Activated T-helper 1 cell treated with anti-CD3 and anti-CD28 coated beads, Interleukin-12 subunit alpha, Interleukin-12 subunit beta, Interleukin-2, Interleukin-4 antibody, amounts not matched to agents 30 ng/mL and 10 ng/mL and 1 ng/mL, durations not matched to agents 14 hours and 24 hours and 36 hours (primary cell): ENCODE measurements at regions of chr19 and their contacts with region 1.

Region 1: GRCh38 chr19:47348819-47349795 is at the start of gene DHX34:
- DNase-seq: peak; percentile 100
- H3K4me3 Mint-ChIP-seq: peak within 1 kb of the TSS; percentile 93
- H3K27ac Mint-ChIP-seq: peak within 1 kb of the TSS; percentile 94
- H3K4me1 Mint-ChIP-seq: peaks cover 40% of the 10 kb centered on the region
- H3K27me3 Mint-ChIP-seq: no peaks in the 10 kb centered on the region
- total RNA-seq, gene DHX34: 31.1 and 33.9 TPM in 2 replicates

Region 2: GRCh38 chr19:47035127-47036096 is 313.7 kb before region 1 on chr19:
- intact Hi-C with region 1: loop called (anchors 5 kb)
- DNase-seq: peak; percentile 93
- H3K4me3 Mint-ChIP-seq: peak overlapping the region; percentile 86
- H3K27ac Mint-ChIP-seq: peak overlapping the region; percentile 92
- H3K4me1 Mint-ChIP-seq: peaks cover 24% of the 10 kb centered on the region
- H3K27me3 Mint-ChIP-seq: peaks cover 14% of the 10 kb centered on the region

Region 3: GRCh38 chr19:47256688-47257443 is 92.2 kb before region 1 on chr19:
- intact Hi-C with region 1: loop called (anchors 1 kb)
- DNase-seq: peak; percentile 99
- H3K4me3 Mint-ChIP-seq: peak overlapping the region; percentile 86
- H3K27ac Mint-ChIP-seq: peak overlapping the region; percentile 95
- H3K4me1 Mint-ChIP-seq: peaks cover 31% of the 10 kb centered on the region
- H3K27me3 Mint-ChIP-seq: peaks cover 2% of the 10 kb centered on the region

Region 4: GRCh38 chr19:47381653-47382279 is 32.7 kb after region 1 on chr19:
- intact Hi-C with region 1: loop called (anchors 5 kb)
- DNase-seq: no peak
- H3K4me3 Mint-ChIP-seq: no peak overlapping the region
- H3K27ac Mint-ChIP-seq: no peak overlapping the region
- H3K4me1 Mint-ChIP-seq: peaks cover 17% of the 10 kb centered on the region
- H3K27me3 Mint-ChIP-seq: no peaks in the 10 kb centered on the region

Region 5: DNA sequence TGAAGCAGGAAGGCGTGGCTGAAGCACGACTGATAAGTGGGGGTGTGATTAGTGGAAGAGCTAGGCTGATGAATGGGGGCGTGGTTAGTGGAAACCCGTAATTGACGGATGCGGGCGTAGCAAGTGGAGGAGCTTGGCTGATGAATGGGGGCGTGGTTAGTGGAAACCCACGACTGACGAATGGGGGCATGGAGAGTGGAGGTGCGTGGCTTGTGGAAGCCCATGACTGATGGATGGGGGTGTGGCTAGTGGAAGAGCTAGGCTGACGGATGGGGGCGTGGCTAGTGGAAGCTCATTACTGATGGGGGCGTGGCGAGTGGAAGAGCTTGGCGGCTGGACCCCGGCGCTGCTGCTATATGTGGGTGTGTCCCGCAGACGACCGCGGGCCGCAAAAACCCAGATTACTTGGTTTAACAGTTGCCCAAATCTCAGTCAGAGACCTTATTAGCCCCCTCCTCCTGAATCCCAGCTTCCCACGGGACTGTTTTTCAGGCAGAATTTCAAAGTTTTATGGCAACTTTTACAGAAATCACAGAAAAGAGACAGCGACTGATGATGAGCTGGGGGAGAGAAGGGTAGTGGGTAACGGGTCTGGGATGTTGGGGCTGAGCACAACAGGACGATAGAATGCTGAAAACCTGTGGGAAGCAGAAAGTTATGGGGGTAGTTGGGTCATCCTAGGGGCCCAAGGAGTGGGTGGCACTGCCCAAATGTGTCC is 79.2 kb after region 1 on chr19:
- intact Hi-C with region 1: loop called (anchors 1 kb)
- DNase-seq: peak; percentile 78
- H3K4me3 Mint-ChIP-seq: no peak overlapping the region
- H3K27ac Mint-ChIP-seq: no peak overlapping the region
- H3K4me1 Mint-ChIP-seq: peaks cover 22% of the 10 kb centered on the region
- H3K27me3 Mint-ChIP-seq: peaks cover 30% of the 10 kb centered on the region

Region 6: DNA sequence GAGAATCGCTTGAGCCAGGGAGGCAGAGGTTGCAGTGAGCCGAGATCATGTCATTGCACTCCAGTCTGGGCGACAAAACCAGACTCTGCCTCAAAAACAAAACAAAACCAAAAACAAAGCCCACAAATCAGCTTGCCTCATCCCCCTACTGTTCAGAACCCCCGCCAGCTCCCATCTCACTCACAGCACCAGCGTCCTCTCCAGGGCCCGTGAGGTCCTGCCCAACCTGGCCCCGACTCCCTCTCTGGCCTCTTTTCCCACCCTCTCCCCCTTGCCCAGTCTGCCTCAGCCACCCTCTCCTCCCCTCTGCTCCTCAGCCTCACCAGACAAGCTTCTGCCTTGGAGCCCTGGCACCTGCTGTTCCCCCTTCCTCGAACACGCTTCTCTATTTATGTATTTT is 118.8 kb after region 1 on chr19:
- intact Hi-C with region 1: no loop called
- DNase-seq: no peak
- H3K4me3 Mint-ChIP-seq: no peak overlapping the region
- H3K27ac Mint-ChIP-seq: no peak overlapping the region
- H3K4me1 Mint-ChIP-seq: no peaks in the 10 kb centered on the region
- H3K27me3 Mint-ChIP-seq: peaks cover 38% of the 10 kb centered on the region

Region 7: GRCh38 chr19:47600246-47601179 is 251.4 kb after region 1 on chr19:
- intact Hi-C with region 1: loop called (anchors 2 kb)
- DNase-seq: peak; percentile 98
- H3K4me3 Mint-ChIP-seq: peak overlapping the region; percentile 87
- H3K27ac Mint-ChIP-seq: peak overlapping the region; percentile 89
- H3K4me1 Mint-ChIP-seq: peaks cover 31% of the 10 kb centered on the region
- H3K27me3 Mint-ChIP-seq: peaks cover 1% of the 10 kb centered on the region